ENCODE measurements at regions of chr3 and their contacts with region 1.

Region 1: DNA sequence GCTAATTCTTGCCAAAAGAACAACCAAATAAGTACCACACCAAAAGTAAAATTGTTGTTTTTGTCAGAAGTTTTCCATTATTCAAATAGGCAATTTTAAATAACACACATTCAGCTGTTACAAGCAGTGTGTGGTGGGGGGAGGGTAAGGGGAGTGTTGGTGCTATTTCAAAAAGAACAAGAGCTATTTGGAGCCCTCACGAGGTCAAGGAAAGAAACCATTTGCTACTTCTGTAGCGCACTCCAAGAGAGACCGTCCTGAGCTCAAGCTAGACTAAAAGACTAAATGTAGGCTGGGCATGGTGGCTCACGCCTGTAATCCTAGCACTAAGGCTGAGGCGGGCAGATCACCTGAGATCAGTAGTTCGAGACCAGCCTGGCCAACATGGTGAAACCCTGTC is 21.2 kb upstream of the IGF2BP2 start:
- DNase-seq: no peak
- H3K4me3 ChIP-seq: no peak overlapping the region
- H3K27ac ChIP-seq: no peak overlapping the region
- H3K4me1 ChIP-seq: peaks cover 5% of the 10 kb centered on the region
- H3K27me3 ChIP-seq: no peaks in the 10 kb centered on the region
- CTCF ChIP-seq: no peak

Region 2: GRCh38 chr3:185878920-185879319 is 32.9 kb after region 1 on chr3:
- CTCF ChIA-PET with region 1: interaction called, 5 read pairs
- POLR2A ChIA-PET with region 1: no interaction called
- intact Hi-C with region 1: loop called (anchors 2 kb)
- DNase-seq: peak; percentile 65 to 72
- H3K4me3 ChIP-seq: no peak overlapping the region
- H3K27ac ChIP-seq: no peak overlapping the region
- H3K4me1 ChIP-seq: peaks cover 12% of the 10 kb centered on the region
- H3K27me3 ChIP-seq: no peaks in the 10 kb centered on the region
- CTCF ChIP-seq: no peak

Measured in PC-9 (cell line).